ENCODE measurements at regions of chr20 and their contacts with region 1.

Region 1: DNA sequence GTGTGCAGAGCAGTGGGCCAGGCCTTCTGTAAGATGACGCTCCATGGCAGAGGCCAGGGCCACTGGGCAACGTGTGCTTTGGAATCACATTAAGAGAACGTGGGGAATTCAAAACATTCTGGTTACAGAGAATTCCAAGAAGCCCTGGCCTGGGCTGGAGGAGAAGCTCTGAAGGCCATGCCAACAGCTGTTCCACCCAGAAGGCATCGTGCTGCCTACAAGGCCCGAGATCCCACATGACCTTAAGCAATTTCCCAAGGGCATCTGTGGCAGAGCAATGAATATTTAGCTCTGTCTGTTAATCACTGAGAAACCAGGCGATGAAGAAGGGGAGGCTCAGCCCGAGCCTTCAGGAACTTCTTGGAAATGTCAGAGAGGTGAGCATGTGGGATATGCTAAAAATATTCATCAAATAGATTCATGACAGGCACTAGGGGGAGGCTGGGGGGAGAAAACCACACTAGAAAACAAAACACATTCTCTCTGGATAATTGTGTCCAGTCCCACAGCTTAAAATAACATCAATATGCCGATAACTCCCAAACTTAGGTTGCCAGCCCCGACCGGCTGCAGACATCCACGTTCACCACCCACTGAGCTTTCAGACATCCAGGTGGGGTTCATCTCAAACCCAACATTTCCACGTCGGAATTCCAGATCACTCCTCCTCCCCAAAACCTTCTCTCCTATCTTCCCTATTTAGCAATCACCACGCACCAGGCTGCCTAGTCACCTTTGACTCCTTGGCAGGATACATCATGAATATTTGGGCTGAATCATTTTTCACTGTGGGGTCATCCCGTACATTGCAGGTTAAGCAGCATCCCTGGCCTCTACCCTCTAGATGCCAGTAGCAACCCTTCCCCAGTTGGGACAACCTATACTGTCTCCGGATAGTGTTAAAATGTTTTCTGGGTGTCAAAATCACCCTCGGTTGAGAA is 6.6 kb downstream of the SULF2 start:
- DNase-seq: no peak
- ATAC-seq: no peak
- H3K4me3 ChIP-seq: no peak overlapping the region
- H3K27ac ChIP-seq: no peak overlapping the region
- H3K4me1 ChIP-seq: peaks cover 0 to 54% (median 16%) of the 10 kb centered on the region in 12 donors
- H3K27me3 ChIP-seq: peaks cover 0 to 14% (median 4%) of the 10 kb centered on the region in 9 donors
- CTCF ChIP-seq: no peak
- POLR2A ChIP-seq: no peak

Region 2: DNA sequence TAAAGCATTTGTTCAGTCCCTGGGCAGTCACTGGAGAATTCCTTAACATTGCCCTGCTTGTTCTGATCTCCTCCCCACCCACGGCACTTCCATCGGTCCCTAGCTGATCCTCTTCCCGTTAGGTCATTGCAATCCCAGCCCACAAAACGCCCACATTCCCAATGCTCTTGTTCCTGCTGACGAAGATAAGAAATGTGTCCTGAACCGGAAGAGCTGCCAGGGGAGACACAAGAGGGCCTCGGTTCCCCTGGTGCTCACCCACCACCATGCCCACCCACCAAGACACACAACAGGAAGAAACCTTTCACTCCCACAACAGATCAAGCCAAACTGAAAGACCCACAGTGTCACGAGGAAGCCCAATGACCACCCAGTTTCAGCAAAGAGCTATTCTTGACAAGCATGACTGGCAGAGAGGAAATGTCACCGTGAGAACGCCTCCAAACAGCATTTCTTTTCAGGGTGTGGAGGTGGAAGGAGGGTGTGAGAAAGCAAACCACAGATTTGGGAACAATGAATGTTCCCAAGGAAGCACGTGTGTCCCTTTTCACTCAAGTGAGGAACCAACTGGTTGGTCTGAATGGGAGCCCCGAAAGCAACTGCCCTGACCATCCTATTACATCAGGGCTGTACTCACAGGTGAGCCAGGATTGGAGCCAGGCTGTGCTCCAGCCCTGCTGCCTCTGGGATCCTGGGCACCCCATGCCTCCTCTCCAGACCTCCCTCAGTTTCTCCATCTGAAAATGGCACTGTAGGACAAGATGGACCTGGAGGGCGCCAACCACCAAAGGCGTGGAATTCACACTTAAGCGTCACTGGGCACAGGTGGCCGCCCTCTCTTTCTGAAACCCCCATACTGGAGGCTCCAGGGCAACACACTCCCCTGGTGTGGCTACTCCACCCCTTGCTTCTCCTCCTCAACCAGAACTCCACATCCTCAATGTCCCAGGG is 519.6 kb before region 1 on chr20:
- intact Hi-C with region 1: no loop called
- DNase-seq: peak in 4 of 5 donors; percentile 62 to 83 (median 70)
- ATAC-seq: peak; percentile 68 to 84 (median 75)
- H3K4me3 ChIP-seq: no peak overlapping the region
- H3K27ac ChIP-seq: peak overlapping the region; percentile 29 to 88 (median 81)
- H3K4me1 ChIP-seq: peaks cover 0 to 60% (median 36%) of the 10 kb centered on the region in 12 donors
- H3K27me3 ChIP-seq: no peaks in the 10 kb centered on the region
- CTCF ChIP-seq: no peak
- POLR2A ChIP-seq: no peak

Region 3: DNA sequence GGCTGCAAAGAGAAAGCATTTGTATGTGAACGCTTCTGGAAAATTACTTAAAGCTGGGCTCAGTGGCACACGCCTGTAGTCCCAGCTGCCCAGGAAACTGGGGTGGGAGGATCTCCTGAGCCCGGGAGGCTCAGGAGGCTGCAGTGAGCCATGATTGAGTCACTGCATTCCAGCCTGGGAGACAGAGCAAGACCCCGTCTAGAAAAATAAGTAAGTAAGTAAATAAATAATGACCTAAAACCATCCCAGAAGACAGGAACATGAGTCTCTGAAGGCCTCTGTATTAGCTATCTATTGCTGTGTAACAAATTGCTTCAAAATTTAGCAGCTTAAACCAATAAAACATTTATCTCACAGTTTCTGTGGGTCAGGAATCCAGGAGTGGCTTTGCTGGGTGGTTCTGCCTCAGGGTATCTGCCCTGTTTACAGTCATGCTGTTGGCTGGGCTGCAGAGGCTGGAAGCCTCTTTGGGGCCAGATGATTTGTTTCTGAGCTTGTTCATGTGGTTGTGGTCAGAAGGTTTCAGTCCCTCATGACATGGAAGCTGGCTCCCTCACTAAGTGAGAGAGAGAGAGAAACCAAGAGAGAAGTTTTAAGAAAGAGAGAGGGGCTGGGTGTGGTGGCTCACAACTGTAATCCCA is 325.4 kb before region 1 on chr20:
- intact Hi-C with region 1: no loop called
- DNase-seq: peak in 1 of 5 donors; percentile 40
- ATAC-seq: peak in 3 of 4 donors; percentile 37 to 87 (median 58)
- H3K4me3 ChIP-seq: no peak overlapping the region
- H3K27ac ChIP-seq: peak overlapping the region in 1 of 12 donors; percentile 39
- H3K4me1 ChIP-seq: peaks cover 0 to 24% (median 0%) of the 10 kb centered on the region in 12 donors
- H3K27me3 ChIP-seq: no peaks in the 10 kb centered on the region
- CTCF ChIP-seq: no peak
- POLR2A ChIP-seq: no peak

Region 4: DNA sequence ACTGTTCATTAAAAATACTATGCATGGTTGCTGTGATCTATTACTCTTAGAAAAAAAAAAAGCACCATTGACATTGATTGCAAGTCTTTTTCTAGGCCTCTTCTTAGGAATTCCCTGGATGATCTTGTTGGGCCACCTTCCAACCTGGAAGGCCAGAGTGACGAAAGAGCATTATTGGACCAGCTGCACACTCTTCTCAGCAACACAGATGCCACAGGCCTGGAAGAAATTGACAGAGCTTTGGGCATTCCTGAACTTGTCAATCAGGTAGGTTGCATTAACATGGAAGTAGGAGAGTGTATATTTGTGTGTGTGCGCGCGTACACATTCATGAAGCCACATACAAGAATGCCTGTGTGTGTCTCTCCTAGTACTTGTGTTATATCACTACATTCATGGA is 136.6 kb before region 1 on chr20:
- intact Hi-C with region 1: no loop called
- DNase-seq: no peak
- ATAC-seq: no peak
- H3K4me3 ChIP-seq: no peak overlapping the region
- H3K27ac ChIP-seq: no peak overlapping the region
- H3K4me1 ChIP-seq: no peaks in the 10 kb centered on the region
- H3K27me3 ChIP-seq: no peaks in the 10 kb centered on the region
- CTCF ChIP-seq: no peak
- POLR2A ChIP-seq: no peak

Region 5: DNA sequence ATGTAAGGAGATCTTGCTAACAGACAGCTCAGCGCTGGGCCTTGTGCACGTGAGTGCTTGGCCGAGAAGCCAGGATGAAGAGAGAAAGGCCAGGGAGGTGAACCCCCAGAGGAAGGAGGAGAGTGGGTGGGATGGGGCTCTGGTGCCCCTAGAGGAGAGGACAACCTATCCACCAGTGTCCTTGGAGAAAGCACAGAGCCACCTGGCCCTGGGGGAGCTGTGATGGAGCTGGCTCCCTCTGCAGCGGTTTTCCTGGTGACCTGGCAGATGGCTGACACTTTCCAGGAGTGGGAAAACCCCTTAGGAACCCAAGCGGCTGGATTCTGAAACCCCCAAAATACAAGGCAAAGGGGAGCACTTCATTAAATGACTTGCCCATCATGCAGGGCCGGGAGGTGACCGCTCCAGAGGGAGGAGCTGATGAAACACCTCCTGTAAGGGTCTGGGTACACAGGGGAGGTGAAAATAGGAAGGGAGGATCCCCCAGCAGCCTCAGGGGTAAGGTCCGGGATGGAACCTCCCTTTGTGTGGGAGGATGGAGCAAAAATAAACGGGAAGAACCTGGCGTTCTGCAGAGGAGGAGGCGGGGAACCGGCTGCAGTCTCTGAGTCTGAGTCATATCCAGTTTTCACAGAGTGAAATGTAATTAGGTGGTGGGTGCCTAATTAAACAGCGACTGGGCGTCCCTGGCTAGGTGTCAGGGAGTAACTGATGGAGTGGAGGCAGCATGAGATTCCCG is 73.7 kb before region 1 on chr20:
- intact Hi-C with region 1: no loop called
- DNase-seq: peak; percentile 28 to 65 (median 56)
- ATAC-seq: peak; percentile 78 to 91 (median 88)
- H3K4me3 ChIP-seq: no peak overlapping the region
- H3K27ac ChIP-seq: peak overlapping the region in 8 of 12 donors; percentile 11 to 69 (median 47)
- H3K4me1 ChIP-seq: peaks cover 0 to 50% (median 19%) of the 10 kb centered on the region in 12 donors
- H3K27me3 ChIP-seq: no peaks in the 10 kb centered on the region
- CTCF ChIP-seq: no peak
- POLR2A ChIP-seq: no peak

Region 6: GRCh38 chr20:47740862-47741184 is 37.8 kb before region 1 on chr20:
- intact Hi-C with region 1: loop called in 2 of 10 experiments (anchors 5 kb)
- DNase-seq: peak in 4 of 5 donors; percentile 21 to 58 (median 38)
- ATAC-seq: peak; percentile 20 to 68 (median 48)
- H3K4me3 ChIP-seq: no peak overlapping the region
- H3K27ac ChIP-seq: no peak overlapping the region
- H3K4me1 ChIP-seq: peaks cover 0 to 12% (median 0%) of the 10 kb centered on the region in 12 donors
- H3K27me3 ChIP-seq: no peaks in the 10 kb centered on the region
- CTCF ChIP-seq: no peak
- POLR2A ChIP-seq: no peak

Region 7: DNA sequence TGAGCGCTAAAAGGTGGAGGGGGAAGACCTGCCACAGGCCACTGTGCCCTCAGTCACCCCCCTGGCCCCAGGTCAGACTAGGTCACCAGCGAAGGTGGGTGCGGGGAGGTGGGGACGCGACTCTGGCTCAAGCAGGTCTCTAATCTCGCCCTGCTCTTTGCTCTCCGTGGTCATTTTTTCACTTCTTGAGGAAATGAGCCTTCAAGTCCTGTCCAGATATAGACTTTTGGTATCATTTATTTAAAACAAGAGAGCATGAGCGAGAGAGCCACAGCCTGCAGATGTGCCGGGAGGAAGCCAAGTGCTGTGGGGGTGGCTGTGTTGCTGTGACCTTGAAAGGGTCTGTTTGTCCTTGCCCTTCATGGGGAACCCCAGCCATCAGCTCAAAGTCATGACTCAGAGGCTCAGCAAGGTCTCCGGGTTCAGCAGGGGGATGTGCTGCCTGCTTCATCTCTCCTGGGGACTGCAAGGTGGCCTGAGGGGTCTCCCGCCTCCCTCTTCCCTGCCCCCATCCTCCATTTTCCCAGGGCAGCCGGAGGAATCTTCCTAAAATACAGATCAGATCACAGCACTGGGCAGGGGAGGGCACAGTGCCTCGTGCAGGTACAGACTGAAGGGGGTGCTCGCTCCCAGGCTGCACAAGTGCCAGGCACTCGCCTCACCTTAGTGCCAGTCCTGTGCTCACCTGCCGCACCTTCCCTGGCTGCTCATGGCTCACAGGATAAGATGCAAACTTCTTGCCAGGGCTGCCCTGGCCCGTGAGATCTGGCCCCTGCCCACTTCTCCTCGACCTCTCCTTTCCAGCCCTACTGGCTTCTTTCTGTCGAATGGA is 19.9 kb before region 1 on chr20:
- intact Hi-C with region 1: loop called in 1 of 10 experiments (anchors 2 kb)
- DNase-seq: no peak
- ATAC-seq: no peak
- H3K4me3 ChIP-seq: no peak overlapping the region
- H3K27ac ChIP-seq: no peak overlapping the region
- H3K4me1 ChIP-seq: peaks cover 0 to 17% (median 9%) of the 10 kb centered on the region in 12 donors
- H3K27me3 ChIP-seq: peaks cover 0 to 16% (median 4%) of the 10 kb centered on the region in 9 donors
- CTCF ChIP-seq: no peak
- POLR2A ChIP-seq: no peak